Prostate gland (tissue), 2 donors: ENCODE measurements at regions of chr3 and their contacts with region 1.

Region 1: GRCh38 chr3:72887705-72888545 is at the start of gene GXYLT2:
- DNase-seq: peak; percentile 52
- H3K4me3 ChIP-seq: peak within 1 kb of the TSS; percentile 35
- H3K27ac ChIP-seq: peak within 1 kb of the TSS; percentile 1 to 2
- H3K4me1 ChIP-seq: no peaks in the 10 kb centered on the region
- H3K27me3 ChIP-seq: no peaks in the 10 kb centered on the region
- CTCF ChIP-seq: no peak
- POLR2A ChIP-seq: no peak
- total RNA-seq, gene GXYLT2: 7.7 to 20.9 TPM

Region 2: GRCh38 chr3:72847751-72848702 is 39.9 kb before region 1 on chr3 and contains the start of gene SHQ1:
- intact Hi-C with region 1: loop called (anchors 5 kb)
- DNase-seq: peak; percentile 94
- H3K4me3 ChIP-seq: peak within 1 kb of the TSS; percentile 72 to 77
- H3K27ac ChIP-seq: peak within 1 kb of the TSS; percentile 67 to 70
- H3K4me1 ChIP-seq: peaks cover 2% of the 10 kb centered on the region
- H3K27me3 ChIP-seq: no peaks in the 10 kb centered on the region
- CTCF ChIP-seq: no peak
- POLR2A ChIP-seq: peak; percentile 38
- total RNA-seq, gene SHQ1: 12.9 to 31.9 TPM

Region 3: DNA sequence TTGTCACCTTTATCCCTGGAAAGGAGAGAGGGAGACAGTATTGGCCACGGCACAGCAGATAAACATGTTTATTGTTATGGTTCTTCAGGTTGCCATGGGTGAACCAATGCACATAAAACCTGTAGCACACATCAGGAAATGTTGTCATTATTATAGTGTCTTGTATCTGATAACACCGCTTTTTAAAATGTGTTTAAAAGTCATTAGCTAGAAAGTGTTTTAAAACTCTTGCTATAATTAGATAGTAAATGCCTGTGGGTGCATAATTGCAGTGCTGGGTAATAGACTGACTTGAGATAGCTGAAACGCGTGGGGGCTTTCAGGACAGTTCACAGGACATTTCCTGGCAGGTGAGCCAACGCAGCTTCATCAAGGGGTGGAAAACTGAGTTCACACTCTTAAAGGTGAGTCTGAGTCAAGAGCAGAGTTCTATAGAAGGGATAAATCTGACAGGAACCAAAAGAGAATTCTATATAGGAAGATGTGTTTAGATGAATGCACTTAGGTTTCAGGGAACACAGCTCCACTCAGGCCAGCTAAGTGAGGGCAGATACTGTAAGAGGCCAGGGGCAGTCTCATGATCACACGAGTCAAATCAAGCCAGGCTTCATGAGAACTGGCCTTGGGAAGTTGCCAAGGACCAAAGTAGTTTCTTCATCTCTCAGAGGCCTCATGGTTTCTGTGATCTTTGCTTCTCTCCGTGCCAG is 73.0 kb after region 1 on chr3:
- intact Hi-C with region 1: no loop called
- DNase-seq: no peak
- H3K4me3 ChIP-seq: no peak overlapping the region
- H3K27ac ChIP-seq: no peak overlapping the region
- H3K4me1 ChIP-seq: no peaks in the 10 kb centered on the region
- H3K27me3 ChIP-seq: no peaks in the 10 kb centered on the region
- CTCF ChIP-seq: no peak
- POLR2A ChIP-seq: no peak

Region 4: GRCh38 chr3:72996473-72997333 is 108.8 kb after region 1 on chr3 and contains the start of gene PPP4R2:
- intact Hi-C with region 1: loop called (anchors 5 kb)
- DNase-seq: peak; percentile 80
- H3K4me3 ChIP-seq: peak within 1 kb of the TSS; percentile 73 to 94
- H3K27ac ChIP-seq: peak within 1 kb of the TSS; percentile 98
- H3K4me1 ChIP-seq: peaks cover 4% of the 10 kb centered on the region
- H3K27me3 ChIP-seq: no peaks in the 10 kb centered on the region
- CTCF ChIP-seq: peak in 2 of 4 experiments; percentile 6 to 31
- POLR2A ChIP-seq: peak; percentile 84
- total RNA-seq, gene PPP4R2: 29.6 to 41.8 TPM

Region 5: DNA sequence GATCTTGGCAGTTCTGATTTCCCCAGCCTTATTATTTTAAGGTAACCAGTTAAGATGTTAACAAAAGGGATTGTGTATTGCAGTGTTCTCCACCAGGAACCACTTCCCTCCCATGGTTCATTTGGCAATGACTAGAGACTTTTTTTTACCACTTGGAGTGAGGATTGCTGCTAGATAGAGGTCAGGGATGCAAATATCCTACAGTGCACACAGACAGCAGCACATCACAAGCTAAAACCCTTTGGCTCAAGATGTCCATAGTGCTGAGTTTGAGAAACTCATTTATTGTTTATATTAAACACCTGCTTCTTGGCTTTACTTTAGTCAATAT is 149.4 kb after region 1 on chr3:
- intact Hi-C with region 1: no loop called
- DNase-seq: no peak
- H3K4me3 ChIP-seq: no peak overlapping the region
- H3K27ac ChIP-seq: no peak overlapping the region
- H3K4me1 ChIP-seq: no peaks in the 10 kb centered on the region
- H3K27me3 ChIP-seq: no peaks in the 10 kb centered on the region
- CTCF ChIP-seq: no peak
- POLR2A ChIP-seq: no peak